Mammary epithelial cell (primary cell): ENCODE measurements at regions of chr19 and their contacts with region 1.

Region 1: DNA sequence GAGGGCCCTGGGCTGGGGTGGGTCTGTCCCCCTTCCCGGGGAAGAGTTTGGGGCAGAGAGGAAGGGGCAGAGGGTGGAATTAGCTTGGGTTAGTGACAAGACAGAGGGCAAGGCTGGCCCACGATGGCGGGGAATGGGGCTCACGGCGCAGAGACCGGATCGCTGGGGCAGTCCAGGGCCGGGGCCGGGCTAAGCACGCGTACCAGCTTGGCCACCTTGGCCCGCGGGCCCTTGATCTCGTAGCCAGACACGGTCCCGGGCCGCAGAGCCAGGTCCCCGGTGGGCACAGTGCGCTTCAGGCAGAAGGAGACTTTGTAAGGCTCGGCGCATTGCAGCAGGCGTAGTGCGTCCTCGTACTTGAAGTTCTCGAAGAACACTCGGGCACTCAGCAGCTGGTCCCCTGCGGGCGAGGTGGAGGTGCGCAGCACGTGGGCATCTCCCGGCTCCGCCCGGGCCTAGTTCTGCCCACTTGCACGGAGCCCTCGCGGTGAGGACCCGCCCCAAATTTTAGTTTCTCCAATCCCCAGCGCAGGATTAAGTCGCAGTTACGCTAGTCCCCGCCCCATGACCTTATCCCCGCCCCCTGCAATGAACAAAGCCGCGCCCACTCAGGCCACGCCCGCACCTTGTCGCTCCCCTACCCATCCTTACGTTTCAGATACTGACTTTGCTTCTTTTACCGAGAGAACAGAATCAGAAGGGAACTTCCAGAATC is 8.6 kb upstream of the HIPK4 start:
- DNase-seq: peak; percentile 25
- H3K4me3 ChIP-seq: no peak overlapping the region
- H3K27ac ChIP-seq: no peak overlapping the region
- H3K4me1 ChIP-seq: peaks cover 11% of the 10 kb centered on the region
- H3K27me3 ChIP-seq: no peaks in the 10 kb centered on the region
- CTCF ChIP-seq: no peak

Region 2: GRCh38 chr19:40294560-40294959 is 104.0 kb before region 1 on chr19:
- CTCF ChIA-PET with region 1: no interaction called
- dilution Hi-C with region 1: loop called (anchors 5 kb)
- in situ Hi-C with region 1: no loop called
- intact Hi-C with region 1: no loop called
- DNase-seq: no peak
- H3K4me3 ChIP-seq: no peak overlapping the region
- H3K27ac ChIP-seq: no peak overlapping the region
- H3K4me1 ChIP-seq: no peaks in the 10 kb centered on the region
- H3K27me3 ChIP-seq: no peaks in the 10 kb centered on the region
- CTCF ChIP-seq: no peak

Region 3: DNA sequence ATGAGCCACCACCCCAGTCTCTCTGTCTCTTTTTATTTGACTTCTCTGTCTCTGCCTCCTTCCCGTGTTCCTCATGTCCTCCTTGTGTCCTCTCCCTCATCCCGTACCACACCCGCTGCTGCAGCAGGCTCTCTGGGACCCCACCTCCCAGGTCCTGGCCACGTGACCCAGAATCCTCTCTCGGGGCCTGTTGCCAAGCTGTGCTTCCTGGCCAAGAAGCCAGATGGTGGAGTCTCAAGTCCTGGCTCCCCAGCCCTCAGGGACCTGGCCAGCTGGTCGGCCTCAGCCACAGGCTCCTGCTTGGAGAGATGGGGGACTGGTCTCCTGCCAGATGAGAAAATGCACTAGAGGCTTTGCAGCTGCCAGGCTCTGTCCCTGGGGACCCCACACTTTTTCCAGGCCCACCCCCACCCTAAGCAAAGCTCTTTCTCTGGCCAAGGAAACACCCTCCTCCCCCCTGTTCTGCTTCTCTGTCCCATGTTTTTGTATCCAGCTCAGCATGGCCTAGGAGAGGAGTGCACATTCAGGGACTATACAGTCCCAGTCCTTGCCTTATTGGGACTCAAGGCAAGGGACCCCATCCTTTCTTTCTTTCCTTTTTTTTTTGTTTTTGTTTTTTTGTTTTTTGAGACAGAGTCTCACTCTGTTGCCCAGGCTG is 143.8 kb after region 1 on chr19:
- CTCF ChIA-PET with region 1: no interaction called
- dilution Hi-C with region 1: loop called (anchors 5 kb)
- in situ Hi-C with region 1: no loop called
- intact Hi-C with region 1: no loop called
- DNase-seq: no peak
- H3K4me3 ChIP-seq: no peak overlapping the region
- H3K27ac ChIP-seq: no peak overlapping the region
- H3K4me1 ChIP-seq: no peaks in the 10 kb centered on the region
- H3K27me3 ChIP-seq: no peaks in the 10 kb centered on the region
- CTCF ChIP-seq: no peak

Region 4: GRCh38 chr19:40690693-40691420 is 292.3 kb after region 1 on chr19:
- CTCF ChIA-PET with region 1: no interaction called
- dilution Hi-C with region 1: no loop called
- in situ Hi-C with region 1: no loop called
- intact Hi-C with region 1: no loop called
- DNase-seq: peak; percentile 86
- H3K4me3 ChIP-seq: peak overlapping the region; percentile 29 to 61 (median 39)
- H3K27ac ChIP-seq: peak overlapping the region; percentile 50
- H3K4me1 ChIP-seq: peaks cover 18% of the 10 kb centered on the region
- H3K27me3 ChIP-seq: no peaks in the 10 kb centered on the region
- CTCF ChIP-seq: no peak